CD8-positive, alpha-beta T cell (primary cell): ENCODE measurements at regions of chr3 and their contacts with region 1.

Region 1: DNA sequence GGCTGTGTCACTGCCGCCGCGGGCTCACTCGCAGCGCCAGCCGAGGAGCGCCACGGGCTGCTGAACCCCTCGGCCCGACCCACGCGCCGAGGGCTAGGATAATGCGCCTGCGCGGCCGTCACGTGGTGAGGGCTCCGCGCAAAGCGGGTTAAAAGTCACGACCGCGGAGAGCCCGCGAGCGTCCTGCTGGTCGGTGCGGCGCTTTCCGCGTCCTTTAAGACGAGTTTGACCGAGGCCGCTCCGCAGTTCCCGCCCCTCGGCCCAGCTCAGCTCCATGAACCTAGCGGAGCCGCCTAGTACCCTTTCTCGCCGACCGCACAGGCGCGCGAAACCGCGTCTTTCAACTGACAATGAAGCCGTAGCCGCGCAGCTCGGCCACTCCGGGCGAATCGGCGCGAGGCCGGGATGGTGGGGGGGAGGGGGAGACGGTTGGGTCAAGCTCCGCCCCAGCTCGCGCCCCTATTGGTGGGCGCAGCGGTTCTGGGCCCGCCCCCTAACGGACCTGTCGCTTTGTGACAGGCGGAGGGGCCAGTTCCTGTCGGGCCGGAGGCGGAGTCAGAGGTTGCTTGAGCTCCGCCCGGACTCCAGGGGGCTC is 636 bp upstream of the STT3B start:
- DNase-seq: peak; percentile 97 to 99 (median 98)
- ATAC-seq: peak; percentile 85
- H3K4me3 ChIP-seq: peak overlapping the region; percentile 70 to 94
- H3K4me3 Mint-ChIP-seq: peak overlapping the region; percentile 99
- H3K27ac ChIP-seq: peak overlapping the region; percentile 86 to 99
- H3K27ac Mint-ChIP-seq: peak overlapping the region; percentile 97
- H3K4me1 ChIP-seq: peaks cover 21% of the 10 kb centered on the region
- H3K4me1 Mint-ChIP-seq: peaks cover 30% of the 10 kb centered on the region
- H3K27me3 ChIP-seq: peaks cover 0 to 3% of the 10 kb centered on the region in 2 experiments
- H3K27me3 Mint-ChIP-seq: no peaks in the 10 kb centered on the region
- CTCF ChIP-seq: no peak

Region 2: DNA sequence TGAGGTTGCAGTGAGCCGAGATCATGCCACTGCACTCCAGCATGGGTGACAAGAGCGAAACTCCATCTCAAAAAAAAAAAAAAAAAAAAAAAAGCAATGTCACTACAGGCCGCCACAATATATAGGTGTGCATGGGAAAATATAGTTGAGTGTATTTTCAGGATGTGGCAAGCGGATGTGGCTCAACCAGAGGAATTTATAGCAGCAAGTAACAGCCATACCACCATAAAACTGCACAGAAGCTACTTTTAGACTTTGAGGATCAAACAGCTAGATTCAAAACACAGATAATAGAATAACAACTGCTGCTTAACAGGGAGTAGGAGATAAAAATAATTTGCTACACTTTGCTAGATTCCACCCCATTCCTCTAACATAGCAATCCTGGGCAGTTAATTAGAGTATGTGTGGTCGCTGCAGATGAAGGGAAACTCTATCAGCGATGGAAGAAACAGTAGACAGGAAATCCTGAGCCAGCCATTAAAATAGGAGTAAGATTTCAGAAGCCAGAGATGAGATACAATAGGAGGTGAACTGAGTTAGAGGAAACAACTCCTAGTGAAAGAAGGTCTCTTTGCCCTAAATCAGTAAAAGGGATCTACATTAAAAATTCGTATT is 318.1 kb before region 1 on chr3:
- CTCF ChIA-PET with region 1: no interaction called
- POLR2A ChIA-PET with region 1: interaction called, 4 read pairs
- intact Hi-C with region 1: loop called (anchors 2 to 10 kb)
- DNase-seq: peak in 5 of 9 experiments; percentile 15 to 70 (median 34)
- ATAC-seq: peak; percentile 55
- H3K4me3 ChIP-seq: no peak overlapping the region
- H3K4me3 Mint-ChIP-seq: peak overlapping the region; percentile 74
- H3K27ac ChIP-seq: no peak overlapping the region
- H3K27ac Mint-ChIP-seq: peak overlapping the region; percentile 78
- H3K4me1 ChIP-seq: peaks cover 43% of the 10 kb centered on the region
- H3K4me1 Mint-ChIP-seq: peaks cover 86% of the 10 kb centered on the region
- H3K27me3 ChIP-seq: no peaks in the 10 kb centered on the region
- H3K27me3 Mint-ChIP-seq: no peaks in the 10 kb centered on the region
- CTCF ChIP-seq: no peak

Region 3: GRCh38 chr3:31242026-31242960 is 289.8 kb before region 1 on chr3:
- CTCF ChIA-PET with region 1: no interaction called
- POLR2A ChIA-PET with region 1: no interaction called
- intact Hi-C with region 1: no loop called
- DNase-seq: no peak
- ATAC-seq: no peak
- H3K4me3 ChIP-seq: no peak overlapping the region
- H3K4me3 Mint-ChIP-seq: no peak overlapping the region
- H3K27ac ChIP-seq: no peak overlapping the region
- H3K27ac Mint-ChIP-seq: no peak overlapping the region
- H3K4me1 ChIP-seq: no peaks in the 10 kb centered on the region
- H3K4me1 Mint-ChIP-seq: no peaks in the 10 kb centered on the region
- H3K27me3 ChIP-seq: no peaks in the 10 kb centered on the region
- H3K27me3 Mint-ChIP-seq: no peaks in the 10 kb centered on the region
- CTCF ChIP-seq: no peak

Region 4: DNA sequence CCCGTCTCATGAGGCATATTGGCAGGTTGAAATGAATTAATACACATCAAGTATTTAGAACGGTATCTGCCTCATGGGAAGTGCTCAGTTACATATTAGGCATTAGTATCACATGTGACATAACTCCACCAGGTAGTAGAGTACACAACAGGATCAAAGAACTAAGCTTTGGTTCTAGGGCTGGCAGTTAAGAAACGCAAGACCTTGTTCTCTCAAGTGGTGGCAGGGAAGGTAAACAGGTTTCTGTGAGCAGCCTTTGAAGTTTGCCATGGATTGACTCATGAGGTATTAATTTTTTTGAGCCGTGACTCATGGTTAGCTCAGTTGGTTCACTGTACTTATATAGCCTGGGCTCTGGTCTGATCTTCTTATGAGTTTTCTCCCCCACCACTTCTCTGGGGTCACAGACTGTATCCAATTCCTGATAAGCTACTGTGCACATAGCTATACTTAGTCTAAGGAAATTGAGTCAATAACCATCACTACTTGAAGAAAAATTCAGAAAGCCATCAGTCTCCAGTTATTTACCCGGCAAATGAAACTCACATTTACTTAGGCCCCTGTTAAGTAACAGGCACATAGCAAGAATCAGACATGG is 154.9 kb before region 1 on chr3:
- CTCF ChIA-PET with region 1: no interaction called
- POLR2A ChIA-PET with region 1: no interaction called
- intact Hi-C with region 1: loop called in 1 of 2 experiments (anchors 10 kb)
- DNase-seq: peak in 2 of 9 experiments; percentile 38 to 55
- ATAC-seq: peak; percentile 88
- H3K4me3 ChIP-seq: no peak overlapping the region
- H3K4me3 Mint-ChIP-seq: no peak overlapping the region
- H3K27ac ChIP-seq: no peak overlapping the region
- H3K27ac Mint-ChIP-seq: no peak overlapping the region
- H3K4me1 ChIP-seq: peaks cover 7% of the 10 kb centered on the region
- H3K4me1 Mint-ChIP-seq: peaks cover 12% of the 10 kb centered on the region
- H3K27me3 ChIP-seq: no peaks in the 10 kb centered on the region
- H3K27me3 Mint-ChIP-seq: no peaks in the 10 kb centered on the region
- CTCF ChIP-seq: no peak

Region 5: GRCh38 chr3:31550452-31551251 is 18.6 kb after region 1 on chr3:
- CTCF ChIA-PET with region 1: interaction called, 6 read pairs
- POLR2A ChIA-PET with region 1: interaction called, 8 read pairs
- intact Hi-C with region 1: loop called (anchors 1 to 2 kb)
- DNase-seq: peak in 2 of 9 experiments; percentile 59 to 72
- ATAC-seq: peak; percentile 73
- H3K4me3 ChIP-seq: no peak overlapping the region
- H3K4me3 Mint-ChIP-seq: peak overlapping the region; percentile 33
- H3K27ac ChIP-seq: no peak overlapping the region
- H3K27ac Mint-ChIP-seq: peak overlapping the region; percentile 70
- H3K4me1 ChIP-seq: peaks cover 57% of the 10 kb centered on the region
- H3K4me1 Mint-ChIP-seq: peaks cover 83% of the 10 kb centered on the region
- H3K27me3 ChIP-seq: no peaks in the 10 kb centered on the region
- H3K27me3 Mint-ChIP-seq: no peaks in the 10 kb centered on the region
- CTCF ChIP-seq: peak; percentile 64

Region 6: DNA sequence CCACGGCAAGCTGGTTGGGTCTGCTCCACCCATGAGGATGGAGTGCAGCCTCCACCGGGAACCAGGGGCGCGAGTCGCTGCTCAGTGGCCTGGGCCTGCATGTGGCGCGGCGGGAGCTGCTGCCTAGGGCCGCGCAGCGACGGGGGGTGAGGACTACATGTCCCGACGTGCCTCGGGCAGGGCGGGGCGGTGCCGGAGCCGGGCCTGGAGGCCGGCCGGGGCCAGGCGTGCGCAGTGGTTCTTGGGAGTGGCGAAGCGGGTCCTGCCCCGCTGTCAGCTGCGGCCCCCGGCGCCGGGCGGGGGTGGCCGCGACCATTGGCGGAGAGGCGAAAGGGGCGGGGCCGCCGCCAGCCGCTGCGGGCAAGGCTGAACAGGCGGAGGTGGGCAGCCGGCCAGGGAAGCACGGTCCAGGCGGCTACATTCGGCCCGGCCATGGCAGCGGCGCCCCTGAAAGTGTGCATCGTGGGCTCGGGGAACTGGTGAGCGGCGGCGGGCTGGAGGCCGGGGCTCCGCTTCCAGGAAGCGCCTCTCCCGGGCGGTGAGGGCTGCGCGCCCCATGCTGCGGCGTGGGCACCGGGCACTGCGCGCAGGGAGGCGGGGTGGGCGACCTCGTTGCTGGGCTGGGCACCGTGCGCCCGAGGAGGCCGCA is 574.3 kb after region 1 on chr3 and contains the start of gene GPD1L:
- CTCF ChIA-PET with region 1: no interaction called
- POLR2A ChIA-PET with region 1: interaction called, 3 read pairs
- intact Hi-C with region 1: loop called in 1 of 2 experiments (anchors 1 kb)
- DNase-seq: peak; percentile 84 to 95 (median 90)
- ATAC-seq: peak; percentile 97
- H3K4me3 ChIP-seq: peak within 1 kb of the TSS; percentile 70 to 80
- H3K4me3 Mint-ChIP-seq: peak within 1 kb of the TSS; percentile 91
- H3K27ac ChIP-seq: peak within 1 kb of the TSS; percentile 46 to 57
- H3K27ac Mint-ChIP-seq: peak within 1 kb of the TSS; percentile 67
- H3K4me1 ChIP-seq: peaks cover 13% of the 10 kb centered on the region
- H3K4me1 Mint-ChIP-seq: peaks cover 33% of the 10 kb centered on the region
- H3K27me3 ChIP-seq: no peaks in the 10 kb centered on the region
- H3K27me3 Mint-ChIP-seq: no peaks in the 10 kb centered on the region
- CTCF ChIP-seq: no peak
- total RNA-seq, gene GPD1L: 9.5 to 9.8 TPM

Region 7: DNA sequence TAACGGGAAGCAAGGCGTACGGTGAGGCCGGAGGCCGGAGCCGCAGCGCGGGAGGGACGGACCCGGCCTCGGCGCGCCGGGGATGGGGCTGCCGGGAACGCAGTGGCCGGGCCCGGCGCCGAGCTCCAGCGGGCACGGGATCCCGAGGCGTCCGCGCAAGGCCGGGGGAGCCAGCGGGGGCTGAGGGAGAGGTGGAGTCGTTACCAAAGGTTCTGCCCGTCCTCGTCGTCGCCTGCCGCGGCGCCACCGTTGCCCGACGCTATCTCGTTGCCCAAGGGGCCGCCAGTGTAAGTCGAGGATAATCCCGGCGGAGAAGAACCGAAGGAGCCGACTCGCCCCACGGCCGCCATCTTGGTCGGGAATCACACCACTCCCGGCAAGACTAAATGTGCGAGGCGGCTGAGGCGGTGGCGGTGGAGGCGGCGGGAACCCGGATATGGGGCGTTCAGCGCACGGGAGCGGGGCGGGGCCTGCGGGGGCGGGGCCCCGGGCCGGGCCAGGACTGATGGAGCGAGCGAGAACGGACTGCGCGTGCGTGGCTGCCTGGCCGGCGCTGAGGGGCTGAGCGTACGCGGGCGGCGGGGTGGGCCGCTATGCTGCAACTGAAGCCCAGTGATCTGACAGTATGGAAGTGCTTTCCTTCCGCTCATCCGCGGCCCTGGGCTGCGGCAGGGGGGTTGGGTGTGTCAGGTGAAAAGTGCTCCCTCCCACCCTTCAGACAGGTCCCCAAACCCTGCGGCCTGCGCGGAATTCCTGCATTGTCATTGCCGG is 1038.5 kb after region 1 on chr3 and contains the start of gene DYNC1LI1:
- CTCF ChIA-PET with region 1: no interaction called
- POLR2A ChIA-PET with region 1: no interaction called
- intact Hi-C with region 1: loop called in 1 of 2 experiments (anchors 2 kb)
- DNase-seq: peak; percentile 84 to 97 (median 93)
- ATAC-seq: peak; percentile 95
- H3K4me3 ChIP-seq: peak within 1 kb of the TSS; percentile 72 to 96
- H3K4me3 Mint-ChIP-seq: peak within 1 kb of the TSS; percentile 94
- H3K27ac ChIP-seq: peak within 1 kb of the TSS; percentile 71 to 87
- H3K27ac Mint-ChIP-seq: peak within 1 kb of the TSS; percentile 94
- H3K4me1 ChIP-seq: peaks cover 8% of the 10 kb centered on the region
- H3K4me1 Mint-ChIP-seq: peaks cover 34% of the 10 kb centered on the region
- H3K27me3 ChIP-seq: no peaks in the 10 kb centered on the region
- H3K27me3 Mint-ChIP-seq: no peaks in the 10 kb centered on the region
- CTCF ChIP-seq: no peak
- total RNA-seq, gene DYNC1LI1: 29.2 to 36.1 TPM